Activated CD4-positive, alpha-beta memory T cell treated with anti-CD3 and anti-CD28 coated beads for 36 hours (primary cell): ENCODE measurements at regions of chr1 and their contacts with region 1.

Region 1: DNA sequence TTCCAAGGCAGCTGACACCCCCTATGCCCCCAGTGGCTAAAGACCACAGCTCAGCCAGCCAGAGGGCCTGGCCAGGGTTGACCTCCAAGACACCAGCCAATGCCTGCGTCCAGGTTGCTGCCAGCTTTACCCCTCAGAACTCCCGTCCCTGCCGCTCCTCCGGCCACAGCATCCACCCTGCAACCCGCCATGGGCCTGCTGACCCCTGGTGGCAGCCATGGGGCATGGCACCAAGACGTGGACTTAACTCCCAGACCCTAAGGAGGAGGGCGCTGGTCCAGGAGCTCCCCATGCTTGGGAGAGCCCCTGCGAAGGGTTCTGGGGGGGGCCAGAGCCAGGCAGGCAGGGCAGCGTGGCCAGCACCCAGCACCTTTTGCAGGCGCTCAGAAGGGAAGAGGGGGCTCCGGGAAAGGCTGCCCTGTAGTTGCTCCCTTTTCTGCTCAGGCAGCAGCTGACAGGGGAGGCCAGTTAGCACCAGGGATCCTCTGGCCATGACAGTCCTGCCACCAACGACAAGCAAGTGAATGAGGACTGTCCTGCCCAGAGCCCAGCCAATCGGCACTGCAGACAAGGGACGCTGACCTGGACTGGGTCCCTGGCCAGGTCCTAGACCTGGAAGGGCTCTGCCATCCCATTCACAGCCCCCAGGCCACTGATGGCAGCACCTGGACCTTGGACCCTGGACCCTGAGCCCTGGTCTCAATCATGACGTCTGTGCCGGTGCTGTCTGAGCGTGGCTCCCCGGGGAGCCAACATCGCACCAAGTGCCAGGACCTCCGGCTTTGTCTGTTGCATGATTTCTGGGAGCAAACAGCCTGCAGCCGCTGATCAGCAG is 246.2 kb downstream of the NPHP4 start:
- DNase-seq: peak; percentile 68
- H3K4me3 Mint-ChIP-seq: no peak overlapping the region
- H3K27ac Mint-ChIP-seq: no peak overlapping the region
- H3K4me1 Mint-ChIP-seq: no peaks in the 10 kb centered on the region
- H3K27me3 Mint-ChIP-seq: peaks cover 6% of the 10 kb centered on the region

Region 2: DNA sequence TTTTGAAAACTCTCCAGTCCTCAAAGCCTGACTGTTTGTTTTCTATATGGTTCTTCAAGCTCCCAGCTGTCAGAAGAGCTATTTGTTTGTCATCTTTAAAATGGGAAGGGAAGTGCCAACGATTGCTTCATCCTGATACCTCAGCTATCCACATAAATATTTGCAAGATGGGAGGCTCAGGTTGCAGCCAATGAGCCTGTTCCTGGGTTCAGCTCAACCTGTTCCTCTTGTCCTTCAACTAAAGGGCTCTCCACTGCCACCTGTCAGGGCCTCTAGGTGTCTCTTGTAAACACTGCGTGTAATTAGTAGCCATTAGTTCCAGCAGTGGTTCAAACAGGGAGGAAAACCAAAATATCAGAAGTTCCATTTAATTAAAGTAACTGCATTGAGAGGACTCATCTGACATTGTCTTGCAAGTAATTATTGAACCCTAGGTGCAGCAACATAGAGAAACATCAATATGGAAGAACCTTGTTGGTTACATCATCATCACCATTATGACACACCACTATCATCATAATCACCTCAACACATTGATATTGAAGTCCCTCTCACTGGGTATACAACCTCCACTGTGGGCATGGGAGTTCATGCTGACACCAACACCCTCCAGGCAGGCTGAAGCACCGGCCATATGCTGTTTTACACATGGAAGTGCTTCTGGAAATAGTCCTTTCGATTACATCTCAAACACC is 646.3 kb before region 1 on chr1:
- CTCF ChIA-PET with region 1: no interaction called
- POLR2A ChIA-PET with region 1: no interaction called
- intact Hi-C with region 1: no loop called
- DNase-seq: no peak
- H3K4me3 Mint-ChIP-seq: no peak overlapping the region
- H3K27ac Mint-ChIP-seq: no peak overlapping the region
- H3K4me1 Mint-ChIP-seq: no peaks in the 10 kb centered on the region
- H3K27me3 Mint-ChIP-seq: peaks cover 6% of the 10 kb centered on the region

Region 3: GRCh38 chr1:5637171-5637570 is 108.8 kb before region 1 on chr1:
- CTCF ChIA-PET with region 1: interaction called, 11 read pairs
- POLR2A ChIA-PET with region 1: no interaction called
- intact Hi-C with region 1: loop called (anchors 2 kb)
- DNase-seq: peak; percentile 38
- H3K4me3 Mint-ChIP-seq: no peak overlapping the region
- H3K27ac Mint-ChIP-seq: no peak overlapping the region
- H3K4me1 Mint-ChIP-seq: peaks cover 4% of the 10 kb centered on the region
- H3K27me3 Mint-ChIP-seq: peaks cover 12% of the 10 kb centered on the region

Region 4: GRCh38 chr1:5667513-5668325 is 78.3 kb before region 1 on chr1:
- CTCF ChIA-PET with region 1: no interaction called
- POLR2A ChIA-PET with region 1: no interaction called
- intact Hi-C with region 1: no loop called
- DNase-seq: peak; percentile 19
- H3K4me3 Mint-ChIP-seq: no peak overlapping the region
- H3K27ac Mint-ChIP-seq: no peak overlapping the region
- H3K4me1 Mint-ChIP-seq: peaks cover 9% of the 10 kb centered on the region
- H3K27me3 Mint-ChIP-seq: no peaks in the 10 kb centered on the region

Region 5: DNA sequence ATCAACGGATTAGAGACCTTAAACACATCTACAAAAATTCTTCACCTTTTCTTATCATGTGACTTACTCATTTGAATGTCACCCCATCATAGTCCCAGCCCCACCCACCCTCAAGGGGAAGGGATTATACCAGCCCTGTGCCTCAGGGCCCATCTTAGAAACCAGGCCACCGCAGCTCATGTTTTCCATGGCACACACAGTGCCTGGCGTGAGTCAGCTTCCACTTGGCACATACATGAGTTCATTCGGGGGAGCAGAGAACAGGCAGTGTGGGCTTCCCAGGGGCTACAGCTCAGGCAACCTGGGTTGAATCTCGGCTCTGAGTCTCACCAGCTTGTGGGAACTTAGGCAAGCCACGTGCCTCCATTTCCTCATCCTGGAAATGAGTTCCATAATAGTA is 64.3 kb before region 1 on chr1:
- CTCF ChIA-PET with region 1: no interaction called
- POLR2A ChIA-PET with region 1: no interaction called
- intact Hi-C with region 1: no loop called
- DNase-seq: no peak
- H3K4me3 Mint-ChIP-seq: no peak overlapping the region
- H3K27ac Mint-ChIP-seq: no peak overlapping the region
- H3K4me1 Mint-ChIP-seq: no peaks in the 10 kb centered on the region
- H3K27me3 Mint-ChIP-seq: peaks cover 8% of the 10 kb centered on the region